Dorsolateral prefrontal cortex (tissue), 120 donors: ENCODE measurements at regions of chr6 and their contacts with region 1.

Region 1: DNA sequence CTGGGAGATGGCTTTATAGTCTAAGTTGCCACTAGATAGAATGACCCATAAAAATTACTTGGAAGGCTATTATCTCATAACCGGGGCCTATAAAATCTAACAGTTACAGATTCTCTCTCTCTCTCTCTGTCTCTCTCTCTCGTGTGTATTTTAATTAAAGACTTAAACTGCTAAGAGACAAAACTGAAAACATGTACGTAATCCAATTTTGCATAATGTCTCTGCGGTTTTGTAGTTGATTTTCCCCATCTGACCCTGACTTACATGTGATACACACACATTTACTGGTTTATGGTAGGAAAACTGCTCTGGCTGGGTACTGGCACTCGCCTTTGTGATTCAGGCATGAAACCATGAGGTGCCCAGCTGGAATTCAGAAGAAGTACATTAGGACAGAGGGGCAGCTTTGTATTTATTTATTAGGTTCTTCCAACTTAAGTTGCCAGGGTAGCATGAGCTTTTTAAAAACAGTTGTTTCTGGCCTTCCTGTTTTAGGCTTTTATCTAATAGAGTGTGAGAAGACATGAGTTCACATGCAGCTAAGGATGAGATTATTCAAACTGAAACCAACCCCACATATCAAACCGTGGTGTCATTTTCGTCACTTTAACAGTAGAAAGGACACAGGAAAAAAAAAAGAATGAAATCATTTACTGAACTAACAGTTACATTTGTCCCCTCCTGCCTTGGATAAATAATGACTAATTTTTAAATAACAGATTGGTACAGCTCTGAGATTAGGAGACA is 182.5 kb downstream of the GMPR start:
- DNase-seq: no peak
- H3K4me3 ChIP-seq: peak overlapping the region in 31 of 59 donors; percentile 0 to 44 (median 19)
- H3K27ac ChIP-seq: peak overlapping the region in 13 of 59 donors; percentile 11 to 64 (median 25)
- H3K27me3 ChIP-seq: no peaks in the 10 kb centered on the region
- CTCF ChIP-seq: no peak

Region 2: DNA sequence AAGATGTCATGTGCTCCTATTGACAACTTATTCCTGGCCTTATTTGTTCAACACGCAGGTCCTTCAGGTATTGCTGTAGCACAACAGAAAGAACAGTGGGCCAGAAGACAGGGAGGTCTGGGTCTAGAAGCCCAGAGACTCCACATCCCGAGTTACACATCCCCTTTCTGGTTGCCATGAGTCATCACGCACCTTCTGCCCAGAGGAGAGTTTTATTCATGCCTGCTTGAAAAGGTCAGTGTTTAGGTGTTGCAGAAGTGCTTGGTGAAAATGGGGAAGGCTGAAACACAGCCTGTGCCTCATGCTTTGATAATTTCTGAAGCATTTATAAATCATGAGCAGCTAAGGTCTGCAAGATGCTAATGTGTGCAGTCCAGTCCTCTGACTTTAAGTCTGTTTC is 73.9 kb after region 1 on chr6:
- intact Hi-C with region 1: loop called in 1 of 2 experiments (anchors 5 kb)
- DNase-seq: no peak
- H3K4me3 ChIP-seq: no peak overlapping the region
- H3K27ac ChIP-seq: no peak overlapping the region
- H3K27me3 ChIP-seq: no peaks in the 10 kb centered on the region
- CTCF ChIP-seq: no peak

Region 3: GRCh38 chr6:16514249-16514648 is 93.4 kb after region 1 on chr6:
- intact Hi-C with region 1: loop called in 1 of 2 experiments (anchors 5 kb)
- DNase-seq: peak in 3 of 10 donors; percentile 5 to 48 (median 41)
- H3K4me3 ChIP-seq: peak overlapping the region in 46 of 59 donors; percentile 4 to 56 (median 31)
- H3K27ac ChIP-seq: peak overlapping the region in 57 of 59 donors; percentile 2 to 87 (median 68)
- H3K27me3 ChIP-seq: no peaks in the 10 kb centered on the region
- CTCF ChIP-seq: peak; percentile 26 to 76 (median 64)